ENCODE measurements at regions of chr19 and their contacts with region 1.

Region 1: GRCh38 chr19:2151339-2152229 is at the start of gene AP3D1:
- DNase-seq: peak; percentile 100
- H3K4me3 Mint-ChIP-seq: peak within 1 kb of the TSS; percentile 82
- H3K27ac Mint-ChIP-seq: peak within 1 kb of the TSS; percentile 82
- H3K4me1 Mint-ChIP-seq: peaks cover 43% of the 10 kb centered on the region
- H3K27me3 Mint-ChIP-seq: no peaks in the 10 kb centered on the region
- total RNA-seq, gene AP3D1: 84.6 to 89.1 TPM

Region 2: GRCh38 chr19:2096480-2097329 is 54.9 kb before region 1 on chr19 and contains the start of gene IZUMO4:
- CTCF ChIA-PET with region 1: interaction called, 3 read pairs
- POLR2A ChIA-PET with region 1: no interaction called
- intact Hi-C with region 1: loop called (anchors 1 kb)
- DNase-seq: peak; percentile 100
- H3K4me3 Mint-ChIP-seq: peak within 1 kb of the TSS; percentile 94
- H3K27ac Mint-ChIP-seq: peak within 1 kb of the TSS; percentile 87
- H3K4me1 Mint-ChIP-seq: peaks cover 29% of the 10 kb centered on the region
- H3K27me3 Mint-ChIP-seq: no peaks in the 10 kb centered on the region
- total RNA-seq, gene IZUMO4: 14.2 to 16.4 TPM

Region 3: GRCh38 chr19:2236314-2237050 is 84.9 kb after region 1 on chr19 and contains the starts of genes PLEKHJ1 and SF3A2:
- CTCF ChIA-PET with region 1: interaction called, 19 read pairs
- POLR2A ChIA-PET with region 1: interaction called, 6 read pairs
- intact Hi-C with region 1: loop called (anchors 5 kb)
- DNase-seq: peak; percentile 99
- H3K4me3 Mint-ChIP-seq: peak within 1 kb of the TSS; percentile 97
- H3K27ac Mint-ChIP-seq: peak within 1 kb of the TSS; percentile 95
- H3K4me1 Mint-ChIP-seq: peaks cover 59% of the 10 kb centered on the region
- H3K27me3 Mint-ChIP-seq: peaks cover 4% of the 10 kb centered on the region
- total RNA-seq, gene PLEKHJ1: 60.8 to 64.0 TPM
- total RNA-seq, gene SF3A2: 123 to 134 TPM

Region 4: DNA sequence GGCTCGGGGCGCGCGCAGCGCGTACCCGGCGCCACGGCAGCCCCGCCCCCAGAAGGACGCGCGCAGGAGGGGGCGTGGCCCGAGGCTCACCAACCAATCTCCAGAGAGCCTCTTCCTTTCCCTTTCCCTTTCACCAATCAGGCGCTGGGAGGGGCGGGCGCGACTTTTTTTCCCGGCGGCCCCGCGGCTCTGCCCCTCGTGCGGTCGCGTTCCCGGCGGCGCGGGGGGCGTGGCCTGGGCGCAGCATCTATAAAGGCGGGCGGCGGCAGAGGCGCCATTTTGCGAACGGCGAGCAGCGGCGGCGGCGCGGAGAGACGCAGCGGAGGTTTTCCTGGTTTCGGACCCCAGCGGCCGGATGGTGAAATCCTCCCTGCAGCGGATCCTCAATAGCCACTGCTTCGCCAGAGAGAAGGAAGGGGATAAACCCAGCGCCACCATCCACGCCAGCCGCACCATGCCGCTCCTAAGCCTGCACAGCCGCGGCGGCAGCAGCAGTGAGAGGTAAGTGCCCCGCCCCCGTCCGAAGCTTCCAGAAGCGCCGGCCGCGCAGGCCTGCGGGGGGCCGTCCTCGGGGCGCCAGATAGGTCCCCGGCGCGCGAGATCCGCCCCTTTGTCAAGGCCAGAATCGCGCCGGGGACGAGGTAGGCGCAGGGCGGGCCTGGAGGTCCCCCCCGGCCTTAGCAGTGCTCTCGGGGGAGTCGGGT is 117.8 kb after region 1 on chr19:
- CTCF ChIA-PET with region 1: interaction called, 16 read pairs
- POLR2A ChIA-PET with region 1: no interaction called
- intact Hi-C with region 1: loop called (anchors 2 kb)
- DNase-seq: peak; percentile 99
- H3K4me3 Mint-ChIP-seq: peak overlapping the region; percentile 89
- H3K27ac Mint-ChIP-seq: peak overlapping the region; percentile 88
- H3K4me1 Mint-ChIP-seq: peaks cover 34% of the 10 kb centered on the region
- H3K27me3 Mint-ChIP-seq: no peaks in the 10 kb centered on the region

Region 5: GRCh38 chr19:2391118-2391725 is 239.6 kb after region 1 on chr19:
- CTCF ChIA-PET with region 1: interaction called, 15 read pairs
- POLR2A ChIA-PET with region 1: no interaction called
- intact Hi-C with region 1: loop called (anchors 1 kb)
- DNase-seq: peak; percentile 45
- H3K4me3 Mint-ChIP-seq: no peak overlapping the region
- H3K27ac Mint-ChIP-seq: no peak overlapping the region
- H3K4me1 Mint-ChIP-seq: peaks cover 10% of the 10 kb centered on the region
- H3K27me3 Mint-ChIP-seq: no peaks in the 10 kb centered on the region